ENCODE measurements at regions of chr7 and their contacts with region 1.

Region 1: GRCh38 chr7:121081327-121081936 is 92.9 kb downstream of the CPED1 start:
- DNase-seq: no peak

Region 2: GRCh38 chr7:120987683-120988590 is 93.5 kb before region 1 on chr7:
- intact Hi-C with region 1: loop called (anchors 1 kb)
- DNase-seq: peak; percentile 93

Region 3: GRCh38 chr7:121163699-121164098 is 82.3 kb after region 1 on chr7:
- intact Hi-C with region 1: no loop called
- DNase-seq: no peak